HepG2 (cell line): ENCODE measurements at regions of chr11 and their contacts with region 1.

Region 1: GRCh38 chr11:35822815-35823495 is 120.9 kb upstream of the LDLRAD3 start:
- DNase-seq: no peak
- ATAC-seq: no peak
- H3K4me3 ChIP-seq: no peak overlapping the region
- H3K27ac ChIP-seq: no peak overlapping the region
- H3K4me1 ChIP-seq: peaks cover 21% of the 10 kb centered on the region
- H3K27me3 ChIP-seq: no peaks in the 10 kb centered on the region
- CTCF ChIP-seq: no peak
- EP300 ChIP-seq: no peak
- POLR2A ChIP-seq: no peak
- RAD21 ChIP-seq: no peak

Region 2: DNA sequence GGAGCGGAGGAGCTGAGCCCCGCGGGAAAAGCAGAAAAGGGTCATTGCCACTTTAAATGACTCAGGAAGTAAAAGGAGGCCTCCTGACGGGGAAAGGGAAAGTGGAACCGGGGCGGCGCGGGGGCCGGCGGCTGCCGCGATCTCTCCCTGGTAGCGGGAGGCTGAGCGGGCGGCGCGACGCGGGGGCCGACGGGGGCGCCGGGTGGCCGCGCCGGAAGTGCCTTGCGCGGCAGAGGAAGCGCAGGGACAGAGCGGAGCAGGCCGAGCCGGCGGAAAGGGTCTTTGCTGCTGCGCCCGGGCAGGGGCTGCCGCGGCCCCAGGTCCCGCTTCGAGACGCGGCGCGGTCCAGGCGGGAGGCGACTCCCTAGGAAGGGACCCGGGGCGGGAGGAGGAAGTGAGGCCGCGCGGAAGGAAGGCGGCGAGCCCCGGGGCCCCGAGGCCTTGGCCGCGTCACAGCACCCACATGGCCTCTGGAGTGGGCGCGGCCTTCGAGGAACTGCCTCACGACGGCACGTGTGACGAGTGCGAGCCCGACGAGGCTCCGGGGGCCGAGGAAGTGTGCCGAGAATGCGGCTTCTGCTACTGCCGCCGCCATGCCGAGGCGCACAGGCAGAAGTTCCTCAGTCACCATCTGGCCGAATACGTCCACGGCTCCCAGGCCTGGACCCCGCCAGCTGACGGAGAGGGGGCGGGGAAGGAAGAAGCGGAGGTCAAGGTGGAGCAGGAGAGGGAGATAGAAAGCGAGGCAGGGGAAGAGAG is 160.1 kb before region 1 on chr11 and contains the start of gene TRIM44:
- CTCF ChIA-PET with region 1: no interaction called
- POLR2A ChIA-PET with region 1: no interaction called
- in situ Hi-C with region 1: no loop called
- intact Hi-C with region 1: loop called (anchors 5 kb)
- DNase-seq: peak; percentile 59
- ATAC-seq: peak; percentile 89
- H3K4me3 ChIP-seq: peak within 1 kb of the TSS; percentile 54 to 73 (median 64)
- H3K27ac ChIP-seq: peak within 1 kb of the TSS; percentile 89
- H3K4me1 ChIP-seq: peaks cover 48% of the 10 kb centered on the region
- H3K27me3 ChIP-seq: peaks cover 0 to 16% of the 10 kb centered on the region in 2 experiments; a peak in 3 of 5 replicates
- CTCF ChIP-seq: no peak
- EP300 ChIP-seq: no peak
- POLR2A ChIP-seq: peak in 1 of 2 experiments; percentile 60; a peak in 3 of 4 replicates
- RAD21 ChIP-seq: no peak
- total RNA-seq, gene TRIM44: 22.7 and 25.6 TPM in 2 replicates

Region 3: GRCh38 chr11:35714882-35715627 is 107.9 kb before region 1 on chr11:
- CTCF ChIA-PET with region 1: interaction called, 4 read pairs
- POLR2A ChIA-PET with region 1: no interaction called
- in situ Hi-C with region 1: no loop called
- intact Hi-C with region 1: loop called (anchors 10 kb)
- DNase-seq: no peak
- ATAC-seq: no peak
- H3K4me3 ChIP-seq: no peak overlapping the region
- H3K27ac ChIP-seq: no peak overlapping the region
- H3K4me1 ChIP-seq: no peaks in the 10 kb centered on the region
- H3K27me3 ChIP-seq: no peaks in the 10 kb centered on the region
- CTCF ChIP-seq: no peak
- EP300 ChIP-seq: no peak
- POLR2A ChIP-seq: no peak
- RAD21 ChIP-seq: no peak

Region 4: DNA sequence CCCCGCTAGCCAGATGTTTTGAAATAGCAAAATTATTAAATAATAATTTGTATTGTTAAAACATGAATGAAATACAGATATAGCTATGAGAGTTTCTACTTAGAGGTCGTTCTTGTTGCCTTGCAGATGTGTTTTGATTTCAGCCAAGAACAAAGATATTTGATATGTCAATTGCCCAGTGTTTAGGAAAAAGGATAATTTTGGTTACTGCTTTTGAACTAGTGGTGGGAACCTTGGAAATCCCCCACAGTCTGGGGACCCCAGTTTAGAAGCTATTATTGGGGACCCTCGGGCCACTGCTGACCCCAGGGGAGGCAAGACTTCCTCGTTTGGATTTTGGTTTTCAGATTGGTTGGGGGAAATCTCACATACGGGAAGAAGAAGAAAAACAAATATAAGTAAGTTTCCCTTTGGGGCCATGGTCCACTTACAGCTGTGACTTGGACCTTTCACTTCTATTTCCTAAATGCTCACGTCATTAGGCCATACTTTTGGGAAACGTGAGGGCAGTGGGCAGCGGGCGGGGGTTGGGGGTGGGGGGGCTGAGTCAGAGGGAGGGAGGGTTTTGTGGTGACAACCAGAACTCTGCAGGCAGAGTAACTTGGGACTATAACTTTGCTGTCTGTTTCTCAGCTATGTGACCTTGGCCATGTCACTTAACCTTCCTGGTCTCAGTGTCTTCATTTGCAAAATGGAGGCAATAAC is 157.9 kb after region 1 on chr11:
- CTCF ChIA-PET with region 1: no interaction called
- POLR2A ChIA-PET with region 1: no interaction called
- in situ Hi-C with region 1: no loop called
- intact Hi-C with region 1: no loop called
- DNase-seq: no peak
- ATAC-seq: no peak
- H3K4me3 ChIP-seq: no peak overlapping the region
- H3K27ac ChIP-seq: no peak overlapping the region
- H3K4me1 ChIP-seq: no peaks in the 10 kb centered on the region
- H3K27me3 ChIP-seq: peaks cover 0 to 5% of the 10 kb centered on the region in 2 experiments; a peak in 1 of 5 replicates
- CTCF ChIP-seq: no peak
- EP300 ChIP-seq: no peak
- POLR2A ChIP-seq: no peak
- RAD21 ChIP-seq: no peak

Region 5: DNA sequence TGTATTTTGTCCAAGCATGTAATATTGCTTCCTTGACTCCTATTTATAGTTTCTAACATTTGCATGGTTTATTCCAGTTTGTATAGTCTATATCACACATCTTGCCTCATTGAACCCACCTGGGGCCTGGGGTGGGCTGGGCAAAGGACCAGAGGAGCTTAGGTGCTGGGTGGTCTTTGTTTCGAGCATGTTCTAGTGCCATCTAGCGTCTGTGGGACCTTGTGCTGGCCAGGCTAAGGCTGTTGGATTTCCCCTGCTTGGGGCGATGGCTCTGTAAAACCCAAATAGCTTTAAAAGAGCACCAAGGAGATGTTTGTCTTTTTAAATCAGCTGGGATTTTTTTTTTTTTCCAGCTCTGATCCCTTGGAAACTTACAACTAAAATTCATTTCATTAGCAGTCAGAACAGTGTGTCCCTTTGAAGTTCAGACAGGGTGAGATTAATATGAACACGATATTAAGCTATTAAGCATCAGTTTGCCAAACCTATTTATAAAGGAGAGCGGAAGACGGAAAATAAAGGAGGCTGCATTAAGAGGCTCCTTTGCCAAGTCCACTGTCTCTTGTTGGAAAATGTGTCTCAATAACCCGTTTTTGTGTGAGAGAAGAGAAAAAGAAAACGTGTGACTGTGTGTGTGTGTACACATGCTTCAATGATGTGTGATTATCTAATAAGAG is 308.9 kb after region 1 on chr11:
- CTCF ChIA-PET with region 1: interaction called, 3 read pairs
- POLR2A ChIA-PET with region 1: no interaction called
- in situ Hi-C with region 1: no loop called
- intact Hi-C with region 1: loop called (anchors 1 kb)
- DNase-seq: peak; percentile 20
- ATAC-seq: peak; percentile 82
- H3K4me3 ChIP-seq: no peak overlapping the region
- H3K27ac ChIP-seq: no peak overlapping the region
- H3K4me1 ChIP-seq: no peaks in the 10 kb centered on the region
- H3K27me3 ChIP-seq: peaks cover 6 to 14% of the 10 kb centered on the region in 2 experiments; a peak in 3 of 5 replicates
- CTCF ChIP-seq: peak; percentile 81
- EP300 ChIP-seq: no peak
- POLR2A ChIP-seq: no peak
- RAD21 ChIP-seq: no peak

Region 6: GRCh38 chr11:36258730-36259360 is 435.9 kb after region 1 on chr11:
- CTCF ChIA-PET with region 1: no interaction called
- POLR2A ChIA-PET with region 1: no interaction called
- in situ Hi-C with region 1: no loop called
- intact Hi-C with region 1: loop called (anchors 5 kb)
- DNase-seq: peak; percentile 29
- ATAC-seq: peak; percentile 94
- H3K4me3 ChIP-seq: no peak overlapping the region
- H3K27ac ChIP-seq: no peak overlapping the region
- H3K4me1 ChIP-seq: no peaks in the 10 kb centered on the region
- H3K27me3 ChIP-seq: peaks cover 3 to 28% of the 10 kb centered on the region in 2 experiments; a peak in 4 of 5 replicates
- CTCF ChIP-seq: peak; percentile 75
- EP300 ChIP-seq: no peak
- POLR2A ChIP-seq: no peak
- RAD21 ChIP-seq: peak; percentile 27; the same call in 1 of the 2 replicates

Region 7: DNA sequence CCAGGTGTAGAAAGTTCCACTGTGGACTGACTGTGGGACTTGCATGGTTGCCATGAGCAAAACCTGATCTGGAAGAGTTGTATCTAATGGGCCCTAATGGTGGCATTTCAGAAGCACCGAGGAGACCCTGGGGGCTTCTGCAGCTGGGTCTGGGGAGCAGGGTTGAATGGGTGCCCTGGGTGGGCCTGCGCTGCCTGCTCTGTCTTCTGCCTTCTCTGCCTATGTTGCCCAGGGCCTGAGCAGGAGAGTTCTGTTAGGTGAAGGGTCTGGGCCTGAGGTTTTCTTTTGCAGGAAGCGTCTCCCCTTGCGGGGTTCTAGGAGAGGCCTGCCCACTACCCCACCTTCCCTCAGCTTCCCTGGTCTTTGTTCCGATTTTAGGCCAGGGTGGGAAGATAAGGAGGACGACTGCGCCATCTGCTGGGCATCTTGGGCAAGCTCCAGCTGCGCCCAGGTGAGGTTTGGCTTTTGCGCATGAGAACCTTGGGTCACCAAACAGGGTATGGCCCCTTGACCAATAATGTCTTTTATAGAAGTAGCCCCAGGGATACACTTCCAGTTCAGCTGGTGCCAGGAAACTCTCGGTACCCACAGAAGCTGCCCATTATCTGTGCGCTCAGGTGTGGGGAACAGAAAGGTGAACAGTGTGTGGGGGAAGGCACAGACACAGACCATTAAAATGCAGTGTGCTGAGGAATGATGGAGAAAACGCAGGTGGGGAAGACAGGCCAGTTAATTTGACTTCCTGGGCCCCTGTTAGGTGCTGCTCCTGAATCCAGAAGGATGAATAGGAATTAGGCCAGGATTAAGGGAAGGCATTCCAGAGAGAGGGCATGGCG is 443.1 kb after region 1 on chr11:
- CTCF ChIA-PET with region 1: no interaction called
- POLR2A ChIA-PET with region 1: no interaction called
- in situ Hi-C with region 1: loop called (anchors 5 kb)
- intact Hi-C with region 1: no loop called
- DNase-seq: peak; percentile 16
- ATAC-seq: peak; percentile 89
- H3K4me3 ChIP-seq: no peak overlapping the region
- H3K27ac ChIP-seq: no peak overlapping the region
- H3K4me1 ChIP-seq: no peaks in the 10 kb centered on the region
- H3K27me3 ChIP-seq: peaks cover 0 to 10% of the 10 kb centered on the region in 2 experiments; a peak in 2 of 5 replicates
- CTCF ChIP-seq: peak; percentile 88
- EP300 ChIP-seq: no peak
- POLR2A ChIP-seq: no peak
- RAD21 ChIP-seq: peak; percentile 64